Head of caudate nucleus (tissue), 42 donors: ENCODE measurements at regions of chr4 and their contacts with region 1.

Region 1: DNA sequence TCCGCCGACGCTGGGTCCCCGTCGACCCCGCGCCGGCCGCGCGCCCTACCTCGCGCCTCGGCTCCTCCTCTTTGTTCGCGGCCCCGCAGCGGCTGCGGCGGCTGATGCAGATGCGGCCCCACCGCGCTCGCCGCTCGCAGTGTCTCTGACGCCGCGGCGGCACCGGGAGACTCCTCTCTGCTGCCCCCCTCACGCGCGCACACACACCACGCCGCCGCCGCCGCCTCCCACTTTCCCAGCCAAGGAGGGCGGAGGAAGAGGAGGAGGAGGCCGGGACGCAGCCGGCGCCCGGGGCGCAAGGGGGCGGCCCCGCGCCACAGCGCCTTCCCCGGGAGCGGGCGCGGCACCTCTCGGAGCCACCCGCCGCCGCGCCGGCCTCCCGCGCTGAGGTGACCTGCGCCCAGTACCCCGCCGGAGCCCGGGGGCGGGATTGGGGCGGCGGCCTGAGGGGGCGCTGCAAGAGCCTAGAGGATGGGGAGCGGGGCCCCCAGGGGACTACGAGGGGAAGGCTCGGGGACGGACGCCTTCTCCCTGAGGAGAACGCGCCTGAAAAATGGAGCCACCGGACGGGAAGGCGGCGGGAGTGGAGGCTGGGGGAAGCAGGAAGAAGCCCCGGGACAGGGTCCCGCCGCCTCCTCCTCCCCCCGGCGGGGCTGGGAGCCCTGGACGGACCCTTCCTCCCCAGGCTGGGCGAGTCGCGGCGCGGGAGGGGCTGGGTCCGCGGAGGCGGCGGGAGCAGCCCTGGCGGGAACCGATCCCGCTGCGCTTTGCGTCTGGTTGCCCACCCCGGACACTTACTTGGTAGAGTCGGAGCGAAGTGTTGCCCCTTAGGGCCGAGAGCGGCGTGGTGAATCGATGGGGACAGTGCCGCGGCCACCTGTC is at the start of gene SH3RF1:
- DNase-seq: peak; percentile 57 to 95 (median 87)

Region 2: DNA sequence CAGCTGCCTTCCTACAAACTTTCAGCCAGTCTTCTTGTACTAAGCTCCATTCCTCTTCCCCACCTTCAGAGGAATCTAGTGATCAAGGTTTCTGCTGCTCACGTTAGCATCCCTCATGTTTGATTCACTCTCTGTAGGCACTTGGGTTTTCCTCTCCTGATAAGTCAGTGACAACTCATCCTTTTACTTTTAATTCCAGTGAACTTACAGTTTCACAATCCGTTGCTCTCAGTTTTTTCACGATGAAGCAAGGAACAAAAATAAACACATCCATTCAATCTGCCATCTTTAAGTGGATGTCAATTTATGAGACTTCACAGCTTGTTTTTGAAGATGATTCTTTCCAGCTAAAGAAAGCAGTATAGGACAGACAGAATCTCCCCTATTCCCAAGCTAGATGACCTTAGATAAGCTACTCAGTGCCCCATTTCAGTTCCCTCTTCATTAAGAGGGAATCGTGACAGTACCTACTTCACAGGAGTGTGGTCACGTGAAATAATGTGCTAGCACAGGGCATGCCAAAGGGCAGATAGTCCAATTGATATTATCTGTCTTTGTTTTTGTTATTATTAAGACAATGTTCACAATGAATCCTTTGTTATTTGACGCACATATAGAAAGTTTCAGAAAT is 539.9 kb before region 1 on chr4:
- intact Hi-C with region 1: no loop called
- DNase-seq: no peak

Region 3: GRCh38 chr4:168765726-168766125 is 505.3 kb before region 1 on chr4:
- intact Hi-C with region 1: no loop called
- DNase-seq: no peak

Region 4: DNA sequence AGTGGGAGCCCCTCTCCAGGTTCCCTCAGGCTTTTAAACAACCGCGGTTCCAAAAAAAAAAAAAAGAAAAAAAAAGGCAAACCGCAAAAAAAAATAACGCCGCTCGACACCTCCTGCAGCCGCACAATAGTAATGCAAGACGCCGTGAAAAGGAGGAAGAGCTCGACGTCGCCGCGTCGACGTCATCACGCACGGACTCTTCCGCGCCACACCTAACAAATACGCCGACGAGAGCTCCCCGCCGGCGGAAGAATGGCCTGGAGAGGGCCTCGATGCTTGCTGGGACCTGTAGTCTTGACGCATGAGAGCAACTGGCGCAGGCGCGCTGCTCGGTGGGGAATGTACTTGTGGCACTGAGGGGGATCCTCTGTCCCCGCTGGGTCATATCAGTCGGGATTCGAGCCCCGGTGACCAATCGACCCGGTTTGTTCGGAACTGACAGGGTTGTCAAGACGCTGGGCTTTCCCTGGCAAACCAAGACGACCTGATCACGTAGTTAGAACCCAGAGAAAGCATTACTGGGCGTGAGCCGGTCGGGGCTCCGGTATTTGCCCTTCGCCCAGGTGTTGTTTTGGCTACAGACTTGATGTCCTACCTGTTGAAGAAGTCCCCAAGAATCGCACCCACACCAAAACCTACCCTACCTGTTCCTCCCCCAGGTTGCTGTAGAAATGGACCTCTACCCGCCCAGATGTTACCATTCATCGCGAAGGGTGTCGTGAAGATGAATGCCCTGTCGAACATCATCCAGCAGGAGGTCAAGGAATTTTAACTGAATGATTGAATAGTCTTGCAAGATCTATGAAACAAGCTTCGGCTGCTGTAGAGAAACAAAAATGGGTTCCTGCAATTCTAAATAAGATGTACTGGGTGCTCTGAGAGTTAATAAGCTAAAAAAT is 260.7 kb before region 1 on chr4 and contains the start of gene CBR4:
- intact Hi-C with region 1: loop called (anchors 5 kb)
- DNase-seq: peak; percentile 97 to 100 (median 99)

Region 5: GRCh38 chr4:169485791-169486742 is 215.0 kb after region 1 on chr4:
- intact Hi-C with region 1: loop called (anchors 10 kb)
- DNase-seq: peak in 32 of 42 donors; percentile 14 to 81 (median 50)